HCT116 (cell line): ENCODE measurements at regions of chr3 and their contacts with region 1.

Region 1: GRCh38 chr3:175153595-175153994 is 294.5 kb downstream of the NAALADL2 start:
- DNase-seq: no peak
- ATAC-seq: no peak
- H3K4me3 ChIP-seq: no peak overlapping the region
- H3K27ac ChIP-seq: no peak overlapping the region
- H3K4me1 ChIP-seq: peaks cover 16 to 22% of the 10 kb centered on the region in 2 experiments
- H3K27me3 ChIP-seq: no peaks in the 10 kb centered on the region
- CTCF ChIP-seq: no peak
- POLR2A ChIP-seq: no peak
- RAD21 ChIP-seq: no peak

Region 2: GRCh38 chr3:175136579-175136978 is 17.0 kb before region 1 on chr3:
- CTCF ChIA-PET with region 1: no interaction called
- POLR2A ChIA-PET with region 1: interaction called, 3 read pairs
- RAD21 ChIA-PET with region 1: no interaction called
- intact Hi-C with region 1: loop called (anchors 1 kb)
- DNase-seq: no peak
- ATAC-seq: no peak
- H3K4me3 ChIP-seq: no peak overlapping the region
- H3K27ac ChIP-seq: no peak overlapping the region
- H3K4me1 ChIP-seq: no peaks in the 10 kb centered on the region
- H3K27me3 ChIP-seq: no peaks in the 10 kb centered on the region
- CTCF ChIP-seq: no peak
- POLR2A ChIP-seq: no peak
- RAD21 ChIP-seq: no peak